OCI-LY7 (cell line): ENCODE measurements at regions of chr2 and their contacts with region 1.

Region 1: DNA sequence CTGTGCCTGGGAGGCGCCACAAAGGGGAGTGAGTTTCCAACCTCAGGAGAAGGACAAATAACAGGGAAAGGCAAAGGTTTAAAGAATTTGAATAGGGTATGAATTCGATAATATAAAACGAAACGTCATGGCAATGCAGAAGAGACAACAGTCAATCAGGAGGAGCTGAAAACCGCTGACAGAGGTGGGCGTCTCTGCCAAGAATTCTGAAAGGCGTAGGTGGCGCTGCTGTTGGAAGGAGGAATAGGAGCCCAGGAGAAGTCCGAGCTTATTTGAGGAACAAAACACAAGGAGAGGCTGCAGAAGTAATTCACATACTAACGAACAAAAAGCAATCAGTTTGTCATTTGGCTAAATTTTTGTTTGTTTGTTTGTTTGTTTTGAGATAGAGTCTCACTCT is 485.8 kb upstream of the POU3F3 start:
- DNase-seq: no peak
- H3K4me3 ChIP-seq: no peak overlapping the region
- H3K27ac ChIP-seq: no peak overlapping the region
- H3K4me1 ChIP-seq: no peaks in the 10 kb centered on the region
- CTCF ChIP-seq: no peak

Region 2: DNA sequence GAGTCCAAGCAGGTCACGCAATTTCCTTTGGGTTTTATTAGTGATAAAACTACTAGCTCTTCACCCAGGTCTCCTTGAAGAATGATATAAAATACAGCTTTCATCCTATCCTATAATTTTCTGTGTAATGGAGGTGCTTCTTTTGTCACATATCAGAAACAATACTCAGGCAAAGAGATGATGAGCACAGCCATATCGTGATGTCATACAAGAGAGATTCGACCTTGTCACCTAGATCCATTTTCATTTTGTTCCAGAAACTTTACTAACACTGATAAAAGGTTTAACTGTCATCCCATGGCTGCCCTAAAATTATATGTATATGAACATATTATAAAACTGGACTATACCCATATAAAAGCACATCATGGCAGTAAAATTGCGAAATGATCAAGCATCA is 98.0 kb before region 1 on chr2:
- CTCF ChIA-PET with region 1: no interaction called
- POLR2A ChIA-PET with region 1: no interaction called
- intact Hi-C with region 1: no loop called
- DNase-seq: no peak
- H3K4me3 ChIP-seq: no peak overlapping the region
- H3K27ac ChIP-seq: no peak overlapping the region
- H3K4me1 ChIP-seq: no peaks in the 10 kb centered on the region
- CTCF ChIP-seq: no peak

Region 3: DNA sequence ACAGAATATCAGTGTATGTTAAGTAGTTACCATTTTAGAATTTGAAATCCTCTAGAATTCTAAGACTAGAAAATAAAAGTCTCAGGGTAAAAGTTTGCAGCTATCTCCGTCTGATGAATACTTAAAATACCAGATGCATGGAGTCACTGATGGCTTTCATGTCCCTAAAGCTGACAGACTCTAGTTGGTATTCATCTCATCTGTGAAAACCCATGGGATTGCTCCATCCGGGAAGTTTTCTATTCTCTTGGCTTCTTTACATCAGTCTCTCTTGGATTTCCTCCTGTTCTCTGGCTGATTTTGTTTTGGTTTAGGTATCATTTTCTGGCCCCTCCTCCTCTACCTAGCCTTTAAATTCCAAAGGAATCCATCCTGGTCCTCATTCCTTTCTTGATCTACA is 20.2 kb after region 1 on chr2:
- CTCF ChIA-PET with region 1: no interaction called
- POLR2A ChIA-PET with region 1: no interaction called
- intact Hi-C with region 1: loop called (anchors 1 kb)
- DNase-seq: no peak
- H3K4me3 ChIP-seq: no peak overlapping the region
- H3K27ac ChIP-seq: no peak overlapping the region
- H3K4me1 ChIP-seq: no peaks in the 10 kb centered on the region
- CTCF ChIP-seq: no peak